ENCODE measurements at regions of chr19 and their contacts with region 1.

Region 1: GRCh38 chr19:32405431-32406161 is at the start of gene DPY19L3:
- DNase-seq: peak; percentile 96 to 98
- ATAC-seq: peak; percentile 99
- H3K4me3 ChIP-seq: peak within 1 kb of the TSS; percentile 94
- H3K27ac ChIP-seq: peak within 1 kb of the TSS; percentile 99
- H3K4me1 ChIP-seq: peaks cover 18% of the 10 kb centered on the region
- H3K27me3 ChIP-seq: no peaks in the 10 kb centered on the region
- CTCF ChIP-seq: no peak
- total RNA-seq, gene DPY19L3: 3.1 to 4.8 (median 3.8) TPM

Region 2: GRCh38 chr19:32289566-32290210 is 115.9 kb before region 1 on chr19:
- intact Hi-C with region 1: no loop called
- DNase-seq: no peak
- ATAC-seq: no peak
- H3K4me3 ChIP-seq: no peak overlapping the region
- H3K27ac ChIP-seq: no peak overlapping the region
- H3K4me1 ChIP-seq: no peaks in the 10 kb centered on the region
- H3K27me3 ChIP-seq: no peaks in the 10 kb centered on the region
- CTCF ChIP-seq: no peak

Region 3: GRCh38 chr19:32345261-32346207 is 60.1 kb before region 1 on chr19 and contains the start of gene ZNF507:
- intact Hi-C with region 1: loop called (anchors 2 to 5 kb)
- DNase-seq: peak; percentile 87 to 92
- ATAC-seq: peak; percentile 97 to 99 (median 98)
- H3K4me3 ChIP-seq: peak within 1 kb of the TSS; percentile 95
- H3K27ac ChIP-seq: peak within 1 kb of the TSS; percentile 87
- H3K4me1 ChIP-seq: peaks cover 37% of the 10 kb centered on the region
- H3K27me3 ChIP-seq: no peaks in the 10 kb centered on the region
- CTCF ChIP-seq: peak; percentile 13
- total RNA-seq, gene ZNF507: 23.2 to 25.0 (median 23.8) TPM

Region 4: GRCh38 chr19:32450217-32450616 is 44.6 kb after region 1 on chr19:
- intact Hi-C with region 1: no loop called
- DNase-seq: no peak
- ATAC-seq: no peak
- H3K4me3 ChIP-seq: no peak overlapping the region
- H3K27ac ChIP-seq: no peak overlapping the region
- H3K4me1 ChIP-seq: no peaks in the 10 kb centered on the region
- H3K27me3 ChIP-seq: no peaks in the 10 kb centered on the region
- CTCF ChIP-seq: no peak

Region 5: GRCh38 chr19:32558607-32559228 is 153.1 kb after region 1 on chr19:
- intact Hi-C with region 1: no loop called
- DNase-seq: no peak
- ATAC-seq: no peak
- H3K4me3 ChIP-seq: no peak overlapping the region
- H3K27ac ChIP-seq: no peak overlapping the region
- H3K4me1 ChIP-seq: no peaks in the 10 kb centered on the region
- H3K27me3 ChIP-seq: no peaks in the 10 kb centered on the region
- CTCF ChIP-seq: no peak

Region 6: DNA sequence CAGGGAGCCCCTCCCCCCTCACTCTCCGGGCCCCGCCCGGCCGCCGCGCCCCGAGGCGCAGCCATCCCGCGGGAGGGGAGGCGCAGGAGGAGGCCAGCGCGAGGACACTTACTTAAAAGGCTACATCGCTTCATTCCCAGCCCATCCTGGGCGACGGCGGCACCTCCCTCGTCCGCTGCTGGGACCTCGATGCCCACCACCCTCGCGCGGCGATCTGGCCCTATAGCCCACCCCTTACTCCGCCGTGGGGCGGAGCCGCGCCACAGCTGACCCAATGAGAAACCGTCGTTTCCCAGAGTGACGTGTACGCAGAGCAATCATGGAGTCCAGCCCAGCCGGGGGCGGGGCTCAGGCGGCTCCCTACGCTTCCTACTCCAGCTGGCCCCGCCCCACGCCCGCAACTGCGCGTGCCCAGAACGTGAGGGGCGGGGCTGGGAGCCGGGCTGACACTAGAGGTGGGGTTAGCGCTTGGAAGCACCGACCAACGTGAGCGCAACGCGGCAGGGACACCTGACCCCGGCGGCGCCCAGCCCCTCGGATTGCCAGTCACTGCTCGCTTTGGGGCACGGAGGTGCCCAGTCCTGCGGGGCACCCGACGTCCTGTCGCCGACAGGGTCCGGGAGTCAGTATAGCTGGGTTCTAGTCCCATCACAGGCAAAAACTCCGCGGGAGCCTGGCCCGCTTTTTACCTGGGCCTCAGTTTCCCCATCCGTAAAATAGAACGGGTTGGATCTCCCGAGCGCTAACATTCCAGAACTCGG is 269.5 kb after region 1 on chr19 and contains the start of gene ANKRD27:
- intact Hi-C with region 1: loop called in 1 of 2 experiments (anchors 10 kb)
- DNase-seq: peak; percentile 99
- ATAC-seq: peak; percentile 91 to 96 (median 93)
- H3K4me3 ChIP-seq: peak within 1 kb of the TSS; percentile 99
- H3K27ac ChIP-seq: peak within 1 kb of the TSS; percentile 96
- H3K4me1 ChIP-seq: peaks cover 27% of the 10 kb centered on the region
- H3K27me3 ChIP-seq: peaks cover 0 to 3% (median 0%) of the 10 kb centered on the region in 3 donors
- CTCF ChIP-seq: no peak
- total RNA-seq, gene ANKRD27: 11.2 to 31.7 (median 18.8) TPM

Measured in psoas muscle (tissue), 8 donors.